ENCODE measurements at regions of chr11 and their contacts with region 1.

Region 1: DNA sequence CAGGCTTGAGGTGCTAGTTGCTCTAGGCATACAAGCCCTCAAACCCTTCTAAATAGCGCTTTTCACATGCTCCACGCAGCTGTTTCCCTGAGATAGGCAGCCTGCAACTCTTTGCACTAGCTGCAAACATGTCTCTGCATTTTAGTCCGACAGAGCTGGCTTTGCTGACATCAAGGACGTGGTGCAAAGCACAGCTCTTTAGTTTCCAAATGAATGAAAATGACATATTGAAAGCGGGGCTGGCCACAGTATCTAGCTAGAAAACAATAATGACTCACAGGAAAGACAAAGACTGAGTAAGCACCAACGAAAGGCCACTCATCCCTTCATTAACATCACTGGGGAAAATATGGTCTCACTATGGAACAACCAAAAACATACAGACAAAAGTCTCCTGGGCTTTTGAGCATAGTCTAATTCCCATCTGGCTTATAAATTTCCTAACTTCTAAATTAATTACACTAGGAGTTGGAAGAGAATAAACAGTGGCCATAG is 15.3 kb upstream of the ZC3H12C start:
- DNase-seq: peak; percentile 49
- H3K4me3 Mint-ChIP-seq: peak overlapping the region; percentile 47
- H3K27ac Mint-ChIP-seq: peak overlapping the region; percentile 96
- H3K4me1 Mint-ChIP-seq: peaks cover 40% of the 10 kb centered on the region
- H3K27me3 Mint-ChIP-seq: peaks cover 4% of the 10 kb centered on the region

Region 2: DNA sequence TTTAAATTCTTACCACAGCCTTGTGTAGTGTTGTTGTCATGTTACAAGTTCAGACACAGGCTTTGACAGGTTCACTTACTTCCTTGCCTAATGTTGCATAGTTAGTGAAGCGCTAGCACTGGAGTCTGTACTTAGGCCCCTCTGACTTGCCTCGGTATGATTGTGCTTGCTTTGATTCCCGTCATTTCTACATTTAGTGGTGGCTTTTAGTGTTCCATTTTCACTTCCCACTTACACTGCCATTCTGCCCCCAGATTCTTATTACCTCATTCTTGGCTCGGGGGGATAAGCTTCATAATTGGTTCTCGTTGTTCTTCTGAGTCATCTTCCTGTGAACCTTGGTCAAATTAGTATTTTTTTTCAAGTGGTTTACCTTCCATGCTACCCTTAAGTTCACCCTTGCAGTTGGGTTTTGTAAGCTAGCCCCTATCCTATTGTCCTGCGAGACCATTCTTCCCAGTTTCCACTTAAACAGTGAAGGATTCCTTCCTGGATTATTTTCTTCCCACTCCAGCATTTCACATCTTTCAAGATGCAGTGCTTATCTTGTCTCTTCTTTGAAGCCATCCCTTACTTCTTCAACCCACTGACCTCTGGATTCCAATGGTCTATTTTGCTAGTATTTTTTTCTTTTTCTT is 1344.3 kb before region 1 on chr11:
- intact Hi-C with region 1: loop called (anchors 5 kb)
- DNase-seq: peak; percentile 18
- H3K4me3 Mint-ChIP-seq: peak overlapping the region; percentile 56
- H3K27ac Mint-ChIP-seq: peak overlapping the region; percentile 86
- H3K4me1 Mint-ChIP-seq: peaks cover 50% of the 10 kb centered on the region
- H3K27me3 Mint-ChIP-seq: no peaks in the 10 kb centered on the region

Region 3: GRCh38 chr11:109864834-109865547 is 212.9 kb before region 1 on chr11:
- intact Hi-C with region 1: loop called (anchors 5 kb)
- DNase-seq: no peak
- H3K4me3 Mint-ChIP-seq: no peak overlapping the region
- H3K27ac Mint-ChIP-seq: peak overlapping the region; percentile 76
- H3K4me1 Mint-ChIP-seq: peaks cover 16% of the 10 kb centered on the region
- H3K27me3 Mint-ChIP-seq: no peaks in the 10 kb centered on the region

Region 4: DNA sequence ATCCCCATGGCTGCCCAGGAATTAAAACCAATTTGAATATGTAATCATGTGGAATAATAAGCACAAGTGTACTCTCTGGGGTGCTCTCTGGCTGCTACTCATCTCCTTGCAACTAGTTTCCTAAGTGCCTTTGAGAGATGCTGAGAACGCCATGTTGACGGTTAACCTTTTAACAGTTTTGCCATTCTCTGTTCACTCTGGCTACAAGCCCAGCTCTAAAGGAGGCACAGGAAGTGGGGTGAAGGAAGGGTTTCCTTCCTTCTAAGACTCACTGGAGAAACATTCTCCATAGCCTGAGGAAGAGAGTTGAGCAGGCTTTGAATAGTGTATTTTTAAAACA is 106.7 kb before region 1 on chr11:
- intact Hi-C with region 1: loop called (anchors 1 kb)
- DNase-seq: no peak
- H3K4me3 Mint-ChIP-seq: peak overlapping the region; percentile 11
- H3K27ac Mint-ChIP-seq: peak overlapping the region; percentile 89
- H3K4me1 Mint-ChIP-seq: peaks cover 60% of the 10 kb centered on the region
- H3K27me3 Mint-ChIP-seq: peaks cover 4% of the 10 kb centered on the region

Region 5: DNA sequence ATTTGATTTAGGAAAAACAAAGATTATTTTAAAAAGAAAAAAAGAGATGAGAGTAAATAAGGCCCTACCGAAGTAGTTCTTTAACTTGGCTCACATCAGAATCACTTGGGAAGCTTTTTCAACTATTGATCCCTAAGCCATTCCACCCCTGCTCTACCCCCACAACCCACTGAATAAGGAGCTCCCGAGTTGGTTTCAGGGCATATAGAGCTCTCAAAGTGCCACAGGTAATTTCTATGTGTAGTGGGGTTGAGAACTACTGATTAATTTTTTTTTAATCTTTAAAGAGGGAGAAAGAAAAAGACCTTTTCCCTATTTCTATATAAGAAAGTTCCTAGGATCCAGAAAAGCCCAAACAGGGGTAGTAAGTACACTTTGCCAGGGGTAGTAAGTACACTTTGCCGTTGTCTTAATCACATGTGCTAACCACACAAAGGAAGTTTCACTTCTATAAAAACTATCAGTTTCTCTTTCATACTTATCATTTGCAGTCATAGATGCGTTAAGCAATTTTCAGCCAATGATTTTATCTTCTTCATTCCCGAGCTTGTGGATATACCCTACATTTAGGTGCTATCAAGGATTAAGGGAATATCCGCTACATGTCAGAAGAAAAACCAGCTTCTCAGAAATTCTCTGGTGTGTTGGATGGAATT is 93.1 kb before region 1 on chr11:
- intact Hi-C with region 1: loop called (anchors 1 kb)
- DNase-seq: no peak
- H3K4me3 Mint-ChIP-seq: no peak overlapping the region
- H3K27ac Mint-ChIP-seq: peak overlapping the region; percentile 51
- H3K4me1 Mint-ChIP-seq: peaks cover 28% of the 10 kb centered on the region
- H3K27me3 Mint-ChIP-seq: peaks cover 15% of the 10 kb centered on the region

Region 6: DNA sequence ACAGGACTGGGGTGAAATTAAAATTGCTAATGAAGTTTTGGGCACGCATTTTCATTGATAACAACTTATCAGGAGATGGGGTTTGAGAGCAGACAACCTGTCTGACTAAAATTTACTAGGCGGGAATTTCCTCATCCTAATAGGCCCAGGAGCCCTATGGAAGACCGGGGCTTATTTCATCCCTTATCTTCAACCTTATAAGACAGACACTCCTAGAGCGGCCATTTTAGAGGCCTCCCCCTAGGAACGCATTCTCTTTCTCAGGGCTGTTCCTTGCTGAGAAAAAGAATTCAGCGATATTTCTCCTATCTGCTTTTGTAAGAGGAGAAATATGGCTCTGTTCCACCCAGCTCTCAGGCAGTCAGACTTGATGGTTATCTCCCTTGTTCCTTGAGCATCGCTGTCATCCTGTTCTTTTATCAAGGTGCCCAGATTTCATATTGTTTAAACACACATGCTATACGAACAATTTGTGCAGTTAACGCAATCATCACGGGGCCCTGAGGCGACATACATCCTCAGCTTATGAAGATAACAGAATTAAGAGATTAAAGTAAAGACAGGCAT is 23.9 kb before region 1 on chr11:
- intact Hi-C with region 1: loop called (anchors 2 kb)
- DNase-seq: no peak
- H3K4me3 Mint-ChIP-seq: no peak overlapping the region
- H3K27ac Mint-ChIP-seq: no peak overlapping the region
- H3K4me1 Mint-ChIP-seq: no peaks in the 10 kb centered on the region
- H3K27me3 Mint-ChIP-seq: peaks cover 4% of the 10 kb centered on the region